ENCODE measurements at regions of chr2 and their contacts with region 1.

Region 1: GRCh38 chr2:27303093-27304025 is 4.9 kb downstream of the UCN start:
- DNase-seq: peak; percentile 34
- H3K4me3 Mint-ChIP-seq: peak overlapping the region; percentile 58
- H3K27ac Mint-ChIP-seq: no peak overlapping the region
- H3K4me1 Mint-ChIP-seq: peaks cover 10% of the 10 kb centered on the region
- H3K27me3 Mint-ChIP-seq: peaks cover 17% of the 10 kb centered on the region

Region 2: DNA sequence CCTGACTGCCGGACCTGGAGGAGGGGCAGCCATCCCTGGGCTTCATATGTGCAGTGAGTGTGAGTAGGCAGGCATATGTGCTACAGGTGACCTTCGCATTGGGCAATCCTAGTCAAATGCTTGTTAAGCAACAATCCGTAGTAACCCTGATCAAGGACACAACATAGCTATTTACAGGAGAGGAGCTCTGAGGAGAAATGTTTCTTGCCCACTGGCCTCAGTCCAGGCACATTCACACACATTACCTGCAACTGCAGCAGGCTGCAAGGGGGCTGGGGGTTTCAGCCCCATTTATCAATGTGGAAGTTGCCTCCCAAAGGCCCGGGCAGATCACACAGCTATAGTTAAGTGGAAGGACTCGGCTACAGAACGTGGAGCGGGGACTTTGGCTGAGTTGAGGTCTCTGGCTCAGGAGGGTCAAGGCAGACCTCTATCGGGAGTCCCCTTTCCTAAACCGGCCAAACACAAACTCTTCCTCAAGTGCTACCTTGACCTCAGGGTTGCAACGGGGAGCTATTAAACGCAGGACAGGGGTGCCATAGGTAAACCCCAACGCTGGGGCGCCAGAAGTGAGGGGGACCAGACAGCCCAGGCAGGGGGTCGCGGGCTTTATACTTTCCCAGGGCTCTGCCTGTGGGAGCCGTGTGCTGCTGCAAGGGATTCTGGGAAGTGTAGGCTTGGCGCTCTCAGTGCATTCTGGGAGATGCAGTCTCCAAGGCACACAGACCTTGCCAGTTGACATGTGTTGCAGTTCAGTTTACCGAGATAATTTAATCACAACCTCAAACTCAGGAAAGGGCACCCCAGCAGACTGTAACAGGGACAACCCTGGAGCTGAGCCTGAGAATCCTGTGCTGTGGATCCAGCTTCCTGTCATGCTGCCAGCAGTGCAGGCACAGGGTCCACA is 207.4 kb before region 1 on chr2:
- intact Hi-C with region 1: loop called (anchors 1 kb)
- DNase-seq: peak; percentile 32
- H3K4me3 Mint-ChIP-seq: peak overlapping the region; percentile 37
- H3K27ac Mint-ChIP-seq: no peak overlapping the region
- H3K4me1 Mint-ChIP-seq: peaks cover 16% of the 10 kb centered on the region
- H3K27me3 Mint-ChIP-seq: no peaks in the 10 kb centered on the region

Region 3: DNA sequence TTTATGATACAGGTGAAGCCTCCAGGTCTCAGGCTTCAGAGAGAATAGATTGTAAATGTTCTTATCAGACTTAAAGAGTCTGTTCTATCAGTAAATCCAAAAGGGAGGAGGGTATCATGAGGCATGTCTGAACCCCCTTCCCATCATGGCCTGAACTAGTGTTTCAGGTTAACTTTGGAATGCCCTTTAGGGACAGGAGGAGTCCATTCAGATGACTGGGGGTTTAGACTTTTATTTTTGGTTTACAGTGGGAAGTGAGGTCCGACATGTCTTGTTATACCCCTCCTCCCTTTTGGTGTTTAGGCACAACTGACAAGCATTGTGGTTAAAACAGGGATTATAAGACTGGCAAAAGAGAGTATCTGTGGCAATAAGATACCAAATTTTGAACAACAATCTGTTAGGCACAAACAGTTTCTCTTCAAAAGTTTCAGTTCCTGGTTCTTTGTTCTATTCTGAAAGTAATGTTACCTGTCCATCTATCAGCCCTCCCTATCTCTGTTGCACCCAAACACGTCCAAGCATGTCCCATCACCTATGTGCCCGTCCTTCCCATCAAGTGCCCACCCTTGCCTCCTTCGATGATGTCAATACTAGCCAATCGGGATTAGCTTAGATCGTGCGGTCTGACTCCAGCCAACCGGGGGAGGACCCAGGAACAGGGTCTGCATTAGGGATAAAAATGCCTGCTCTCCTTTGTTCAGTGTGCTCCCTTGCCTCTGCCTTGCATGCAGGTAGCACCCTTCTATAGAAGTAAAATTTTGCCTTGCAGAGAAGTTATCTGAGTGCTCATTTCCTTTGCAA is 138.2 kb before region 1 on chr2:
- intact Hi-C with region 1: loop called (anchors 5 kb)
- DNase-seq: no peak
- H3K4me3 Mint-ChIP-seq: no peak overlapping the region
- H3K27ac Mint-ChIP-seq: no peak overlapping the region
- H3K4me1 Mint-ChIP-seq: no peaks in the 10 kb centered on the region
- H3K27me3 Mint-ChIP-seq: peaks cover 17% of the 10 kb centered on the region

Region 4: GRCh38 chr2:27249891-27250651 is 53.3 kb before region 1 on chr2:
- intact Hi-C with region 1: loop called (anchors 1 kb)
- DNase-seq: peak; percentile 47
- H3K4me3 Mint-ChIP-seq: no peak overlapping the region
- H3K27ac Mint-ChIP-seq: no peak overlapping the region
- H3K4me1 Mint-ChIP-seq: no peaks in the 10 kb centered on the region
- H3K27me3 Mint-ChIP-seq: peaks cover 5% of the 10 kb centered on the region

Measured in activated T-helper 1 cell treated with anti-CD3 and anti-CD28 coated beads, Interleukin-12 subunit alpha, Interleukin-12 subunit beta, Interleukin-2, Interleukin-4 antibody, amounts not matched to agents 30 ng/mL and 10 ng/mL and 1 ng/mL, durations not matched to agents 14 hours and 24 hours and 36 hours (primary cell).